ENCODE measurements at regions of chr13 and their contacts with region 1.

Region 1: DNA sequence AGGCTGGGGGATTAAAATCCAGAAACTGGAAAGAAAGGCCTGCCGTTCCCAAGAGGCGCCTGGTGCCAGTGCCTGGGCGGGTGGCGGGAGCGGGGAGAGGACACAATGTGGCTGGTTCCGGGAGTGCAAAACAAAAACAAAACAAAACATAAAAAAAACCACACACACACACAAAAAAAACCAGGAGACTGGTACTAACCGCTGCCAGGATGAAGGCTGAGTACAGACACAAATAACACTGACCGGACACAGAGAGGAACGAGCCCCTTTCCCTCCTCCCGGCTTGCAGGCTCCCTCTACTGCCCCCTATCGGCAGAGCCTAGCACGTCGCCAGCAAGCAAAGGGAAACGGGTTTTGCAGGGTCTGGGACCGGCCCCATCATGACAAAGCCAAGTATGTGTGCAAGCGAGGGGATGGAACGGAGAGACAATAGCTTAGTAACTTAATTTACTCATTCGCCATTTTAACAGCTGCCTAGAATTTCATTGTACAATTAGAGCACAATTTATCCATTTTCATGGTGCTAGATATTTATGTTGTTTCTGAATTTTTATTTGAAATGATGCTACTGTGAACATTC is 17.9 kb upstream of the ZDHHC20 start:
- H3K4me3 ChIP-seq: no peak overlapping the region; the same call in 1 of the 2 replicates
- H3K27ac ChIP-seq: no peak overlapping the region
- H3K4me1 ChIP-seq: no peaks in the 10 kb centered on the region
- CTCF ChIP-seq: peak; percentile 89

Region 2: GRCh38 chr13:21297914-21298831 is 178.8 kb before region 1 on chr13:
- CTCF ChIA-PET with region 1: interaction called, 23 read pairs
- POLR2A ChIA-PET with region 1: no interaction called
- H3K4me3 ChIP-seq: peak overlapping the region; percentile 86
- H3K27ac ChIP-seq: peak overlapping the region; percentile 14; the same call in 1 of the 2 replicates
- H3K4me1 ChIP-seq: 0 out of 2 replicates have a peak, but pooled peaks cover 2% of the 10 kb centered on the region
- CTCF ChIP-seq: peak; percentile 90

Measured in HEK293 (cell line).